ENCODE measurements at regions of chr15 and their contacts with region 1.

Region 1: DNA sequence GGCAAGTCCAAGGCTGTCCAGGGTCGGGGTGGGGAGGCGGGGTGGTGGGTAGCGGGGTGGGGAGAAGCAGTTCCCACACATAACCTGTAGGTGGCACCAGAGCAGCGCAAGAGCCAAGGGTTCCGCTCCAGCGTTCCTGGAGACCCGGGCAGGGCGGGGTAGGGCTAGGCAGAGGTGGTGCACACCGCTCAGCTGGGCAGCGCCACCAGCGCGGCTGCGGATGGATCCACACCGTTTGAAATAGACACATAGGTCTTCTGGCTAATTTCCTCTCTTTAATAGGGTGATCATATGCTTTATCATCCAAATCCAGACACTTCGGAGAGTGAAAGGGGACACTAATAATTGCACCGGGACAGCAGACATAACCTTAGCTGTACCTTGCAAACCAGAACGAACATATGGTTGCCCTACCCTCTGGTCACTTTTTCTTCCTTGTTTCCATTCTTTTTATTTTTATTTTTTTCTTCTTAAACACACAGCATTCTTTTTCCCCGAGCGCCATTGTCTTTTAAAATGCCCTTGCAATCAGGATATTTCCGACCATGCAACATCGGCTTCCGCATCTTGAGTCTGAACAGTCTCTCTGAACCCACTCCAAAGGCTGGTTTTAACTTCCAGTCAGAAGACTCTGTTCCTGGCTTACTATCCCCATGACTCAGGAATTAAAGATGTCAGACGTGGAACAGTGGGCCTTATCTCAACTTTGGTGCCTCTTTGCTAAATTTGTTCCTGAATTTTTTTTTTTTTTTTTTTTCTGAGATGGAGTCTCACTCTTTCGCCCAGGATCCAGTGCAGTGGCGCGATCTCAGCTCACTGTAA is 12.5 kb upstream of the ZSCAN2 start:
- DNase-seq: peak; percentile 93
- ATAC-seq: peak; percentile 99

Region 2: DNA sequence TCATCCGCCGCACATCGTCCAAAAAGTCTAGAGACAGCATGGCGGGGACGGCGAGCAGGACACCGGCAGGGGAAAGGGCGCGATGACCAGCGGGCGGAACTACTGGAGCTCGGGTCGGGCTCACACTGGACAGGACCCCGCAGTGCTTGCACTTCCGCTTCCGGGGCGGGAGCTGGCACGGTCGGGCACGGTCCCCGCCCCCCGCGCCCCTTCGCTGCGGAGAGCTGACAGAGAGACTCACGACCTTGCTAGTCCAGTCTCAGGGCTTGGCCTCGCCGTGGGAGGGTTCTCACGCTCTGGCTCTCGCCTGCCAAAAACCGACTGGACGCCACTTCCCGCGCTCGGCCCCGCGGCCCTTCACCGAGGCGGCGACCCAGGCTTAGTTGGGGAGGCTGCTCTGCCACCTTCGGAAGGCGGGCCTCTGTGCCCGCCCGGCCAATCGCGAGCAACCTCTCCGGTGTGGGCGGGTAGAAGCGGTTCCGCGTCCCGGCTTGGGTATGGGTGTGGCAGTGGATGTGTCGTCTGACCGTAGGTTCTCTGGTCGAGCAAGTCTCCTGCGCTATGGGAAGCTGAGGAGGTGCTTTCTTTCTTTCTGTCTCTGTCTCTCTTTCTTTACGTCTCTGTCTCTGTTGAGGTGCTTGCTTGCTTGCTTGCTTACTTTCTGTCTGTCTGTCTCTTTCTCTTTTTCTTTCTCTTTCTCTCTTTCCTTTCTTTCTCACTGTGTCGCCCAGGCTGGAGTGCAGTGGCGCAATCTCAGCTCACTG is 128.0 kb after region 1 on chr15 and contains the start of gene SEC11A:
- intact Hi-C with region 1: no loop called
- DNase-seq: peak; percentile 98
- ATAC-seq: peak; percentile 99
- total RNA-seq, gene SEC11A: 84.7 TPM

Region 3: DNA sequence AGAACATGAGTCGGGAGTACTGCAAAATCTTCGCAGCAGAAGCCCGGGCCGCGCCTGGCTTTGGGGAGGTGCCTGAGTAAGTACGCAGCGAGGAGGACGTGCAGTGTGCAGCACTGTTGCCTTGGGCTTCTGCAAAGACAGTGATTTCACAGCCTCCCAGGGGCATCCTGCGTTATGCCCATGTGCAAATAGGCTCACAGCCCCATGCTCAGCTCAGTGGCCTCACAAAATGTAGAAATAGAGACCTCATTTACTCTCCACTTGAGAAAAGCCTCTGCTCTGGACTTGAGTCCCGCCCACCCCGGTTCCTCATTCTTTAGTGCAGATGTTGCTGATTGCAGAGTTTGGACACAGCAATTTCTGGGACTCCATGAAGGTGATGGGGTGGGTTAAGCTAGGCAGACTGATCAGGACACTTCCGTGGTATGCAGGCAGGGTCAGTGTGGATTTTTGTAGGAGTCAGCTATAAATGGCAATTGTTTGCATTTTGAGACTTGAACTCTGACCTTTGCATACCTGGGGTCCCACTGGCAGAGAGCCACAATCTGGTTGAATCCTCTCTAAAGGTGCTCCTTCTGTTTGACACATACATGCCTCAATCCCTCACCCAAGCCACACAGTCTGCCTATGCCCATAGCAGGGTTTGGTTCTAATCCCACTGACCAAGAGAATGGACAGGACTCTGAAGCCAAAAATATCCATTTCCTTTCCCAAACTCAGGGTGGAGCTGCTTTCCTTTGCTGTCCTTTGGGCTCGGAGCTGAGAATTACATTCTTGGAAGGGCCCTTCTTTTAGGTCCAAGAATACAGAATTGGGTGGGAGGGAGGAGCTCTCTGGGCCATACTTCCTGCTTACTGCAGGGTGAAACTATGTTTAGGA is 275.5 kb after region 1 on chr15:
- intact Hi-C with region 1: loop called (anchors 10 kb)
- DNase-seq: no peak
- ATAC-seq: peak; percentile 52

Region 4: DNA sequence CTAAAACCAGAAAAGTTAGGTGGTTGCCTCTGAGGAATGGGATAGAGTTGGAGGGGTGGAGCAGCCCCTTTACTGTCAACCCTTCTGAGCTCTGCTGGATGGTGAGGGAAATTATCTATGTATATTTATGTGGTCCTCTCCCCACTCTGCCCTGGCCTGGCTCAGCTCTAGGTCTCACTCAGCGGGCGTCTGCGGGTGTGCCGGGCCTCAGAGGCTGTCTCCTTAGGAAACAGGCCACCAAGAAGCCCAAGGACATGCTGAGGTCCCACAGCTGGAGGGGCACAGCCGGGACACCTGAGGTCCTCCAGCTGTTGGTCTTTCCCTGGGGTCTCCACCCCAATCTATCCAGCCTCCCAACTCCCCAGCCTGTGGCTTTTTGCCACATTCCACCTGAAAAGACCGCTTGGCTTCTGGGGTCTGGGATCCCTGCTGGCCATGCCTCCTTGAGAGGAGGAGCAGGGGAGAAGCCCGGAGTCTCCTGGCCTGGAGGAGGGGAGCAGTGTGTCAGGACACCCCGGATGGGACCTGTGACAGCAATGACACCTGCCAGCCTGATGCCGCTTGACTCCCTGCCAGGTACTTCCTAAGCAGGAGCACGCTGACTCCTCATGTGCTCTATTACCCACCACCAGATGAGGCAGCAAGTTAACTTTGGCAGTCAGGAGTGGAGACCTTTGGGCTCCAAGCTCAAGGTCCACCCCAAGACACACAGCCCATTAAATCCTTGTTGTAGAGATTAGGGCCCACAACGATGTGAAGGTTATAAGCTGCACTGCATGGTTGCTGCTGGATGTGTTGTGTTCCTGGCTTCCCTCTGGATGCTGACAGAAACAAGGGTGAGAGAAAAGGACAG is 295.9 kb after region 1 on chr15 and contains the start of gene SLC28A1:
- intact Hi-C with region 1: no loop called
- DNase-seq: no peak
- ATAC-seq: no peak
- total RNA-seq, gene SLC28A1: 0.24 TPM

Region 5: GRCh38 chr15:85289677-85290365 is 701.6 kb after region 1 on chr15:
- intact Hi-C with region 1: loop called (anchors 5 kb)
- DNase-seq: peak; percentile 69
- ATAC-seq: peak; percentile 84

Measured in Right ventricle myocardium inferior (tissue), 1 donor.